ENCODE measurements at regions of chr4 and their contacts with region 1.

Region 1: DNA sequence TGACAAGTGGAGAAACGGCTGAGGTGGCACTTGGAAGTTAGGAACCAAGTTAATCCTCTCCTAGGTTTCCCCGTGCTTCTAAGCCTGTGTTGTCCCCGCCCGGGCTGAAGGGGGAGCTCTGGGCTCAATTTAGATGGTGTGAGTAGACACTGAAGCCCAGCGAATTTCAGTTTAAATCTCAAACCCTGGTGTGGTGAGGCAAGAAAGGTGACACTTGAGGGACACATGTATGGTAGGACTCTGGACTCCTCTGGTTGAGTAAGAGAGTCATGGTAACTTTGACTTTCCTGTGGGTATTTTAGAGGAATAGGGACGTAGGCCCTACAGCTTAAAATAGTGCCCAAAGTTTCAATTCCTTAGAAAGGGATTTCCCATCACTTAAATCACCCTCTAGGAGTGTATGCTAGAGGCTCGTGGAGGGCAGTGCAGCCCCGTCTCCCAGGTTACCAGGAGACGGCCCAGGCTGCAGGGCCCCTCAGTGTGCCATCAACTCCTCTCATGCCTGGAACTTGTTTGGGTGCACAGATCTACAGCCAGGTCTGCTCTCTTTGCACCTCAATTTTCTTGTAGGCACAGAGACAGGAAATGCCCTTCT is 24.0 kb downstream of the HAND2 start:
- DNase-seq: peak; percentile 66
- ATAC-seq: peak; percentile 51 to 78 (median 66)
- H3K4me3 ChIP-seq: peak overlapping the region in 9 of 10 donors; percentile 15 to 60 (median 46)
- H3K27ac ChIP-seq: peak overlapping the region in 9 of 10 donors; percentile 77 to 94 (median 91)
- H3K4me1 ChIP-seq: peaks cover 0 to 56% (median 12%) of the 10 kb centered on the region in 9 donors
- H3K27me3 ChIP-seq: peaks cover 0 to 99% (median 43%) of the 10 kb centered on the region in 7 donors
- CTCF ChIP-seq: peak; percentile 53 to 87 (median 77)

Region 2: GRCh38 chr4:173318648-173319211 is 187.3 kb before region 1 on chr4:
- intact Hi-C with region 1: loop called in 1 of 10 experiments (anchors 10 kb)
- DNase-seq: no peak
- ATAC-seq: peak; percentile 28 to 83 (median 70)
- H3K4me3 ChIP-seq: no peak overlapping the region
- H3K27ac ChIP-seq: peak overlapping the region in 2 of 10 donors; percentile 47 to 67
- H3K4me1 ChIP-seq: peaks cover 0 to 18% (median 10%) of the 10 kb centered on the region in 9 donors
- H3K27me3 ChIP-seq: no peaks in the 10 kb centered on the region
- CTCF ChIP-seq: peak; percentile 20 to 73 (median 52)

Region 3: DNA sequence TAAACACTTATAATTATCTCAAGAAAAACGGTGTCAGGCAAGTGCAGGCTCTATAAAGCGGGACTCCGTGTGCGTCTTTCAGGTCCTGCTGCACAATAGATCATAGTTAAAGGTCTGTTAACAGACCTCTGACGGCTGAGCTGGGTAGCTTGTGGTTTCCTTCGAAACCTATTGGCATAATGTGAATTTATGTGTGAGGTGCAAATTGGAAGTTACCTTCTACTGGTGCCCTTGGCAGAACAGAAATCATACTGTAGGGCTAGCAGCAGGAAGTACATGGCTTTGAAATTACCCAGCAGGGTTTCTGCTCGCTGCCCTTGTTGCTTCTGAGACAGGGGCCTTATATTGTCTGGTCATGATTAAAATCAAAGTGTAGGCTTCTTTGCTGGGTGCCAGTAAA is 240.4 kb after region 1 on chr4:
- intact Hi-C with region 1: loop called in 9 of 10 experiments (anchors 1 to 5 kb)
- DNase-seq: no peak
- ATAC-seq: peak; percentile 22 to 72 (median 60)
- H3K4me3 ChIP-seq: peak overlapping the region in 4 of 10 donors; percentile 2 to 11 (median 6)
- H3K27ac ChIP-seq: peak overlapping the region in 9 of 10 donors; percentile 30 to 86 (median 69)
- H3K4me1 ChIP-seq: peaks cover 0 to 20% (median 0%) of the 10 kb centered on the region in 9 donors
- H3K27me3 ChIP-seq: no peaks in the 10 kb centered on the region
- CTCF ChIP-seq: no peak

Region 4: GRCh38 chr4:173827707-173828106 is 321.7 kb after region 1 on chr4:
- intact Hi-C with region 1: loop called in 1 of 10 experiments (anchors 10 kb)
- DNase-seq: no peak
- ATAC-seq: peak in 1 of 8 donors; percentile 41
- H3K4me3 ChIP-seq: no peak overlapping the region
- H3K27ac ChIP-seq: no peak overlapping the region
- H3K4me1 ChIP-seq: no peaks in the 10 kb centered on the region
- H3K27me3 ChIP-seq: no peaks in the 10 kb centered on the region
- CTCF ChIP-seq: peak in 3 of 9 donors; percentile 7 to 36 (median 23)

Region 5: GRCh38 chr4:174120446-174121295 is 614.6 kb after region 1 on chr4:
- intact Hi-C with region 1: loop called in 8 of 10 experiments (anchors 1 to 10 kb)
- DNase-seq: peak; percentile 66 to 67
- ATAC-seq: peak; percentile 67 to 95 (median 83)
- H3K4me3 ChIP-seq: peak overlapping the region in 8 of 10 donors; percentile 17 to 54 (median 44)
- H3K27ac ChIP-seq: peak overlapping the region in 7 of 10 donors; percentile 5 to 65 (median 30)
- H3K4me1 ChIP-seq: peaks cover 0 to 31% (median 0%) of the 10 kb centered on the region in 9 donors
- H3K27me3 ChIP-seq: no peaks in the 10 kb centered on the region
- CTCF ChIP-seq: peak in 8 of 9 donors; percentile 22 to 60 (median 52)

Region 6: GRCh38 chr4:174318829-174319764 is 813.1 kb after region 1 on chr4:
- intact Hi-C with region 1: loop called in 1 of 10 experiments (anchors 10 kb)
- DNase-seq: no peak
- ATAC-seq: no peak
- H3K4me3 ChIP-seq: no peak overlapping the region
- H3K27ac ChIP-seq: no peak overlapping the region
- H3K4me1 ChIP-seq: no peaks in the 10 kb centered on the region
- H3K27me3 ChIP-seq: no peaks in the 10 kb centered on the region
- CTCF ChIP-seq: peak; percentile 40 to 80 (median 74)

Measured in heart right ventricle (tissue), 16 donors.